ENCODE measurements at regions of chr14 and their contacts with region 1.

Region 1: DNA sequence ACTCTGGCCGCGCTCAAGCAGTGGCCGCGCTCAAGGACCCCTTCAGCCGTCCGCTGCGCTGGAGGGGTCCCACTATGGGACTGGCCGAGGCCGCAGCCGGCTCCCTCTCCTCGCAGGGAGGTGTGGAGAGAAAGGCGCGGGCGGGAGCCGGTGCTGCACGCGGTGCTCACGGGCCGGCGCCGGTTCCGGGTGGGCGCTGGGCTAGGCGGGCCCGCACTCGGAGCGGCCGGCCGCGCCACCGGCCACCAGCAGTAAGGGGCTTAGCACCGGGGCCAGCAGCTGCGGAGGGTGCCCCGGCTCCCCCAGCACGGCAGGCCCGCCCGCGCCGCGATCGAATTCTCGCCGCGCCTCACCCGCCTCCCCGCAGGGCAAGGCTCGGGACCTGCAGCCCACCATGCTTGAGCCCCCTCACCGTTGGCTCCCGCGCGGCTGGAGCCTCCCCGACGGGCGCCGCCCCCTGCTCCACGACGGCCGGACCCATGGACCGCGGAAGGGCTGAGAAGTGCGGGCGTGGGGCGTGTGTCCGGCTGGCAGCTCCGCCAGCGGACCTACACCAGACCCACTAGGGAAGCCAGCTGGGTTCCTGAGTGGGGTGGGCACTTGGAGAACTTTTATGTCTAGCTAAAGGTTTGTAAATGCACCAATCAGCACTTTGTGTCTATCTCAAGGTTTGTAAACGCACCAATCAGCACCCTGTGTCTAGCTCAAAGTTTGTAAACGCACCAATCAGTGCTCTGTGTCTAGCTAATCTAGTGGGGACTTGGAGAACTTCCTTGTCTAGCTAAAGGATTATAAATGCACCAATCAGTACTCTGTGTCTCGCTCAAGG is 49.5 kb downstream of the KLHL28 start:
- DNase-seq: peak; percentile 29 to 73 (median 60)
- ATAC-seq: peak; percentile 72 to 78
- H3K4me3 ChIP-seq: peak overlapping the region; percentile 45
- H3K27ac ChIP-seq: no peak overlapping the region
- H3K4me1 ChIP-seq: peaks cover 3% of the 10 kb centered on the region
- H3K27me3 ChIP-seq: no peaks in the 10 kb centered on the region

Region 2: GRCh38 chr14:44961604-44962333 is 49.5 kb after region 1 on chr14 and contains the starts of genes KLHL28 and TOGARAM1:
- intact Hi-C with region 1: loop called in 1 of 4 experiments (anchors 10 kb)
- DNase-seq: peak; percentile 96 to 98 (median 96)
- ATAC-seq: peak; percentile 98
- H3K4me3 ChIP-seq: peak within 1 kb of the TSS; percentile 89
- H3K27ac ChIP-seq: peak within 1 kb of the TSS; percentile 96
- H3K4me1 ChIP-seq: no peaks in the 10 kb centered on the region
- H3K27me3 ChIP-seq: no peaks in the 10 kb centered on the region
- total RNA-seq, gene KLHL28: 9.4 to 13.0 (median 12.3) TPM
- total RNA-seq, gene TOGARAM1: 18.4 to 26.0 (median 19.6) TPM

Region 3: DNA sequence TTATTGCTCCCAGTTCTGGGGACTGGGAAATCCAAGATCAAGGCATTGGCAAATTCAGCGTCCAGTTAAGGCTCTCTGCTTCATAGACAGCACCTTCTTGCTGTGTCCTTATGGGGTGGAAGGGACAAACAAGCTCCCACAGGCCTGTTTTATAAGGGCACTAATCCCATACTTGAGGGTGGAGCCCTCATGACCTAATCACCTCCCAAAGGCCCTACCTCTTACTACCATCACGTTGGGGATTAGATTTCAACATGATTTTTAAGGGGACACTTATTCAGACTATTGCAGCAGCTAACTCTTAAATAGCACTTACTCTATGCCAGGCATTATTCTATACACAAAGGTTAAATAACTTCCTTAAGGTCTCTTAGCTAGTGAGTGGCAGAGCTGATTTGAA is 67.0 kb after region 1 on chr14:
- intact Hi-C with region 1: no loop called
- DNase-seq: no peak
- ATAC-seq: no peak
- H3K4me3 ChIP-seq: no peak overlapping the region
- H3K27ac ChIP-seq: no peak overlapping the region
- H3K4me1 ChIP-seq: peaks cover 3% of the 10 kb centered on the region
- H3K27me3 ChIP-seq: no peaks in the 10 kb centered on the region

Region 4: DNA sequence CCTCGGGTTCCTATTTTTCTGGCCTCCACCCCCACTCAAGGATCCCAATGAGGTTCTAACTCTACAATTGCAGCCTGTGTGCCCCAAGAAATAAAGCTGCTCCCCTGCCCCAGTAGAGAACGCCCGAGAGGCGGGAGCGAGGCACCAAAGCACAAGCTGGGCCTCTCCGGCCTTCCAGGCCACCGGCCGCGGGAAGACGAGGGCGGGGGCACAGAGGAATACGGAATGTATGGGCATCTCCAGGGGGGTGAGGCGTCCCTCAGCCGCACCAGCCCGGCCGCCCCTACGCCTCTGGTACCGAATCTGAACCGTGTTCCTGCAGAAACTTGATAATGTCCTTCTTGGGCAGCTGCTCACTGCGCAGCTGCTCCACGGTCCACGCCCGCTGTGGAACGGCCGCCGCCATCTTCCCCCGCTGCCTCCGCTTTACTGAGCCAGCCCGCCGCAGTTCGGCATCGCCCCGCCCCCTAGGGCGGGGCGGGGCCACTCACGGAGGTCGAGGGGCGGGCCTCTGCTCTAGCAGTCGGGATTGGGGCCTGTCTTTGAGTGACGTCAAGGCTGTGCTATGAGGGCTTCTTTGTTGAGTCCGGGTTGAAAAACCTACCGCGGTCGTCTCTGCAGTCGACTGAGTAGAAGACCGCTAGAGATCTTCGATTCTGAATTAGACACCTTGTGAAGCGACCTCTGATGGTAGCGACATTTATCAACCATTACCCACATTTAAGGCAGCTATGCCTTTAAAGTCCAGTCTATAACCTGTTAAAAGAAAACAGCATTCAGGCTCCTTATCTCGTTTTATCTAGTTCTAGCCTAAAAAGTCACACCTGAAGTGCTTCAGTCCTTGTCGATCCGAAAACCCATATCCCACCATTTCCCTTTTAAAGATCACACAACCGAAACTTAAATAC is 222.1 kb after region 1 on chr14 and contains the start of gene FKBP3:
- intact Hi-C with region 1: loop called in 1 of 4 experiments (anchors 10 kb)
- DNase-seq: peak; percentile 95 to 98 (median 98)
- ATAC-seq: peak; percentile 99
- H3K4me3 ChIP-seq: peak within 1 kb of the TSS; percentile 94
- H3K27ac ChIP-seq: peak within 1 kb of the TSS; percentile 92
- H3K4me1 ChIP-seq: no peaks in the 10 kb centered on the region
- H3K27me3 ChIP-seq: no peaks in the 10 kb centered on the region
- total RNA-seq, gene FKBP3: 81.4 to 91.9 (median 87.8) TPM

Region 5: GRCh38 chr14:45267071-45267470 is 354.8 kb after region 1 on chr14:
- intact Hi-C with region 1: loop called in 2 of 4 experiments (anchors 5 kb)
- DNase-seq: no peak
- ATAC-seq: peak; percentile 82 to 89
- H3K4me3 ChIP-seq: no peak overlapping the region
- H3K27ac ChIP-seq: no peak overlapping the region
- H3K4me1 ChIP-seq: no peaks in the 10 kb centered on the region
- H3K27me3 ChIP-seq: no peaks in the 10 kb centered on the region